Caco-2 (cell line): ENCODE measurements at regions of chr4 and their contacts with region 1.

Region 1: DNA sequence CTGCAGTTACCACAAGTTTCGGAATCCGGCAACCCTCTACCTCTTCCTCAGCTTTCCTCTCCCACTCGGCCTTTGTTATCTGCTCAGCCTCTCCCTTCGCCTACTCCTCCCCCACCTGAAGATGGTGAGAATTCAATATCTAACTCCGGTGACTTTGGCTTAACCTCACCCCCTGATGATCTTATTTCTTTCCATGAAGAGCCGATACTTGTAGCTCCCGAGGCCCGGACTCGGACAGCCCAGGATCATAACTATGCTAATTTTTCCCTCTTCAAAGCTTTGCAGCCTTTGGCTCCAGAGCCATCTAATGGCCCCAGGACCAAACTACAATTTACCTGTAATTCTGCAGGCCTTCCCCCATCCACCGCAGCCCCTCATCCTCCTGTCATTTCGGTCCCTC is 32.0 kb upstream of the MGST2 start:
- DNase-seq: peak; percentile 57 to 59
- H3K4me3 ChIP-seq: peak overlapping the region; percentile 26
- H3K4me3 Mint-ChIP-seq: peak overlapping the region; percentile 67
- H3K27ac Mint-ChIP-seq: peak overlapping the region; percentile 45
- H3K4me1 ChIP-seq: peaks cover 23% of the 10 kb centered on the region
- H3K4me1 Mint-ChIP-seq: peaks cover 12% of the 10 kb centered on the region
- H3K27me3 ChIP-seq: no peaks in the 10 kb centered on the region
- H3K27me3 Mint-ChIP-seq: no peaks in the 10 kb centered on the region
- CTCF ChIP-seq: peak; percentile 45 to 57

Region 2: DNA sequence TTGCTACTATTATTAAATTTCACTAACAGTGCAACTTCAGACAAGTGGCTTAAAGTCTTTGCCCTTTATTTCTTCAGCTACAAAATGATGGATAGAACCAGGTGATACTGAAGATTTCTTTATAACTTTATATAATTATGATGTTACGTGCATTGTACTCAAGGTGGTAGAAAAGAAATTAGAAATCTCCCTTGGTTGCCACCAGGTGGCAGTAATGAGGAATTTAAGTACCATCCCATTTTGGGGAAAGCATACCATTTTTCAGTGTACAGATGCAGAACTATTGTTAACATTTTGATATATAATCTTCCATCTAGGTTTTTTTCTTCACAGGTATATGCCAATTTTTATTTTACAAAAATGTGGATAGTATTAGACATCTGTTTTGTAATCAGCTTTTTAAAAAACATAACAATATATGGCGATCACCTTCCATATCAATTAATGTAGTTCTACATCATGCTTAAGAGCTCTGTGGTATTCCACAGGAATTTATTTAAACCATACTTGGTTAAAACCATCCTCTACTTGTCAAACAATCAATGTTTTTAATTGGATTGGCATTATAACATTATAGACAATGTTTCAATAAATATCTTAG is 217.5 kb before region 1 on chr4:
- CTCF ChIA-PET with region 1: no interaction called
- POLR2A ChIA-PET with region 1: no interaction called
- intact Hi-C with region 1: loop called (anchors 1 kb)
- DNase-seq: peak in 1 of 2 experiments; percentile 43
- H3K4me3 ChIP-seq: no peak overlapping the region
- H3K4me3 Mint-ChIP-seq: no peak overlapping the region
- H3K27ac Mint-ChIP-seq: no peak overlapping the region
- H3K4me1 ChIP-seq: no peaks in the 10 kb centered on the region
- H3K4me1 Mint-ChIP-seq: peaks cover 8% of the 10 kb centered on the region
- H3K27me3 ChIP-seq: no peaks in the 10 kb centered on the region
- H3K27me3 Mint-ChIP-seq: no peaks in the 10 kb centered on the region
- CTCF ChIP-seq: peak; percentile 23 to 42

Region 3: DNA sequence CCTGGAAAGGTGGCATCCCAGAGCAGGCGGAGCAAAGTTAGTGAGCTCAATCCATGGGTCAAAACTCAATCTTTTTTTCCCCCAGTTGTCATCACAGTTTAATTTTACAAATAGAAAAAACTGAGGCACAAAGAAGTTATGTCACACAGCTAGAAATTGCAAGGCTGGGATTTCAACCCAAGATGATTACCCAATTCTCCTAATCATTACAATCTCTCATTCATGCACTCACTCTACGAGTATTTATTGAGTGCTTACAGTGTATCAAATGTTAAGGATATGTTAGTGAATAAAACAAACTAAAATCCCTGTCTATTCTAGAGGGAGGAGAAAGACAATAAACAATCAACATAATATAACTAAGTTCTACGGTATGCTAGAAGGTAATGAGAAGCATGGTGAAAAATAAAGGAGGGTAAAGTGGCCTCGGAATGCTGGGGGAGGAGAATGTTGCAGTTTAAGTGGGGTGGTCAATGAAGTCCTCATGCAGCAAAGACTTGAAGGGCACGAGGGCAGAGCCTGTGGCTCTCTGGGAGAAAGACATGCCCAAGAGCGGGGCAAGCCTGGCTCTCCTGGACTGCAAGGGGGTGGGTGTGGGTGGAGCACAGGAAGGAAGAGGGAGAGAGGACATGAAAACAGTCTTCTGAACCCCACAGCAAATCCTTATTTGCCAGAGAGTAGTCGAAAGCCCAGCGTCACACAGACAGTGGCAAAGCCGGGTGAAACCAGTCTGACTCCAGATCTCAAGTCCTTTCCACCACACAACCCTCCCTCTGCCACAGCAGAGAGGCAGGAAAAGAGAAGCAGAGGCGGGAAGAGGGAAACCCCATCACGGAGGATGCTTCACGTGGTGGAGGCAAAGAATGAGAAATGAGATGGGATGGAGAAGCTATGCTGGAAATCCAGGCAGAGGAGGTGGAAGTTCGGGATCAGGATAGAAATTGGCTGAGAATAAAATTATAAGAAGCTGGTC is 131.4 kb before region 1 on chr4:
- CTCF ChIA-PET with region 1: no interaction called
- POLR2A ChIA-PET with region 1: no interaction called
- intact Hi-C with region 1: loop called (anchors 5 kb)
- DNase-seq: no peak
- H3K4me3 ChIP-seq: no peak overlapping the region
- H3K4me3 Mint-ChIP-seq: no peak overlapping the region
- H3K27ac Mint-ChIP-seq: no peak overlapping the region
- H3K4me1 ChIP-seq: no peaks in the 10 kb centered on the region
- H3K4me1 Mint-ChIP-seq: peaks cover 9% of the 10 kb centered on the region
- H3K27me3 ChIP-seq: no peaks in the 10 kb centered on the region
- H3K27me3 Mint-ChIP-seq: no peaks in the 10 kb centered on the region
- CTCF ChIP-seq: no peak

Region 4: DNA sequence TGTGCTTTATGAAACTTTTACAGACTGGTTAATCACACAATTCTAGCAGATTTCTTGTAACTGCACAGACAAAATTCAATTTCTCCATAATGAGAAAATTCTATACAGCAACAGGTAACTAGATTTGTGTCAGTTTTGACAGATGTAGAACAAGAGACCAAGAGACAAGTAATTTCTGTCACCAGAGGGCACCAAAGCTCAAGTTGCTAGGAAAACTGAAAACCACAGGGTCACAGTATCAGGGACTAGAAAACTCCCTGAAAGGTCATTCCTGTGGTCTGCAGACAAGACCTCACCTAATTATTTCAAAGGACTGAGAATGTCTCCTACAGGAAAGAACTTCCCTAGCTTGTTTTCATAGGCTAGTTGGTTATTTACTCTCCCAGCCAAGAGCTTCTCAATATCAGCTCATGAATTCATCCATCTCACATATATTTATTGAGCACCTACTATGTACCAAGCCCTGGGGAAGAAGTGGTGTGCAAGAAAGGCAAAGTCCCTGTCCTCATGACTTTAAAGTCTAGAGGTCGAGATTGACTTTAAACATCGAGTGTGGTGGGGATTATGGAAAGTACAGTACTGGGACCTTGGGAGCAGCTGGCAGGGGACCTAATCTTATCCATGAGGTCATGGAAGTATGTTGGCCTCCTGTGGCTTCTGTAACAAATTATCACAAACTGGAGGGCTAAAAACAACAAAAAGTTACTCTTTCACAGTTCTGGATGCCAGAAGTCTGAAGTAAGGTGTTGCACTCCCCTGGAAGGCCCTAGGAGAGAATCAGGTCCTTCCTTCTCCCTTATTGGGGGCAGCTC is 29.9 kb before region 1 on chr4:
- CTCF ChIA-PET with region 1: interaction called, 12 read pairs
- POLR2A ChIA-PET with region 1: no interaction called
- intact Hi-C with region 1: loop called (anchors 1 kb)
- DNase-seq: peak; percentile 67 to 77
- H3K4me3 ChIP-seq: no peak overlapping the region
- H3K4me3 Mint-ChIP-seq: no peak overlapping the region
- H3K27ac Mint-ChIP-seq: no peak overlapping the region
- H3K4me1 ChIP-seq: peaks cover 34% of the 10 kb centered on the region; the same call in 1 of the 2 replicates
- H3K4me1 Mint-ChIP-seq: peaks cover 37% of the 10 kb centered on the region
- H3K27me3 ChIP-seq: no peaks in the 10 kb centered on the region
- H3K27me3 Mint-ChIP-seq: no peaks in the 10 kb centered on the region
- CTCF ChIP-seq: peak; percentile 64 to 71

Region 5: GRCh38 chr4:139619644-139620043 is 14.0 kb before region 1 on chr4:
- CTCF ChIA-PET with region 1: interaction called, 12 read pairs
- POLR2A ChIA-PET with region 1: no interaction called
- intact Hi-C with region 1: loop called (anchors 1 kb)
- DNase-seq: no peak
- H3K4me3 ChIP-seq: no peak overlapping the region
- H3K4me3 Mint-ChIP-seq: no peak overlapping the region
- H3K27ac Mint-ChIP-seq: no peak overlapping the region
- H3K4me1 ChIP-seq: peaks cover 14% of the 10 kb centered on the region
- H3K4me1 Mint-ChIP-seq: peaks cover 22% of the 10 kb centered on the region
- H3K27me3 ChIP-seq: no peaks in the 10 kb centered on the region
- H3K27me3 Mint-ChIP-seq: no peaks in the 10 kb centered on the region
- CTCF ChIP-seq: peak; percentile 46 to 49

Region 6: DNA sequence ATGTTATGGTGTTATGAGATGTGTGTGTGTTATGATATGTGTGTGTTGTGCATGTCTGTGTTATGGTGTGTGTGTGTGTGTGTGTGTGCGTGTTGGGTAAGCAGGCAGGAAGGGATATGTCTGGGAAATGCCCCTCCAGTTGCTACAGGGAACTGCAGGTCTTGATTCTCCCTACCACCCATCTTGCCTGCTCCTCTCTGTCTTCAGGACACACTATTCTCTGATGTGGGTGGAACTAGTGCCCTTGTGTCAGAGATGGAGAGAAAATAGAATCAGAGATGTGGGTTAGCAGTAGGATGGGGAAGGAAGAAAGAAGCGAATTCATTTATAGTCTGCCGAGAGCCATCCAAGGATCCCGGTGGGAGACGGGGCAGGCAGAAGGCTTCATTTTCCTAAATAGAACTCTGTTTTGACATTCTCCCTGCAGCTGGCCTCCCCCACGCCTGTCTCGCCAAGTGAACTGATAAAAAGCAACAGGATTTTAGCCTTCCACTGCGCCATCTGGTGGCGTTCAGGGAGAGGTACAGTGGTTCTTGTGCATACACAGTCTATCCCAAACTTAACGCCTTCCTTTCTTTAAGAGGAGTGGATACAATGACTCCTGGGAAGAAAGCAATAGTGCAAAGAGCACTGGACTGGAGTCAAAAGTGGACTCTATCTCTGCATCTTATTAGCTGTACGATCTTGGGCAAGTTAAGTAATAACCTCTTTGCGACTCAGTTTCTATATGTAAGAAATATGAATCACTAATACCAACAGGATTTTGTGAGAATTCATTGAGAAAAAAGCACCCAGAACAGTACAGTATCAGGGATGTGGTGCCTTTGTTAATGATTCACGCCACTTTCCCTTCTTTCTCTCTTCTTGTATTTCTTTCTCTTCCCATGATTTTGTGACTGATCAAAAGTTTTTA is 17.9 kb after region 1 on chr4:
- CTCF ChIA-PET with region 1: interaction called, 7 read pairs
- POLR2A ChIA-PET with region 1: no interaction called
- intact Hi-C with region 1: loop called (anchors 1 kb)
- DNase-seq: peak; percentile 66 to 75
- H3K4me3 ChIP-seq: no peak overlapping the region
- H3K4me3 Mint-ChIP-seq: no peak overlapping the region
- H3K27ac Mint-ChIP-seq: no peak overlapping the region
- H3K4me1 ChIP-seq: peaks cover 2% of the 10 kb centered on the region; the same call in 1 of the 2 replicates
- H3K4me1 Mint-ChIP-seq: peaks cover 12% of the 10 kb centered on the region
- H3K27me3 ChIP-seq: no peaks in the 10 kb centered on the region
- H3K27me3 Mint-ChIP-seq: no peaks in the 10 kb centered on the region
- CTCF ChIP-seq: peak; percentile 86 to 90